ENCODE measurements at regions of chr7 and their contacts with region 1.

Region 1: DNA sequence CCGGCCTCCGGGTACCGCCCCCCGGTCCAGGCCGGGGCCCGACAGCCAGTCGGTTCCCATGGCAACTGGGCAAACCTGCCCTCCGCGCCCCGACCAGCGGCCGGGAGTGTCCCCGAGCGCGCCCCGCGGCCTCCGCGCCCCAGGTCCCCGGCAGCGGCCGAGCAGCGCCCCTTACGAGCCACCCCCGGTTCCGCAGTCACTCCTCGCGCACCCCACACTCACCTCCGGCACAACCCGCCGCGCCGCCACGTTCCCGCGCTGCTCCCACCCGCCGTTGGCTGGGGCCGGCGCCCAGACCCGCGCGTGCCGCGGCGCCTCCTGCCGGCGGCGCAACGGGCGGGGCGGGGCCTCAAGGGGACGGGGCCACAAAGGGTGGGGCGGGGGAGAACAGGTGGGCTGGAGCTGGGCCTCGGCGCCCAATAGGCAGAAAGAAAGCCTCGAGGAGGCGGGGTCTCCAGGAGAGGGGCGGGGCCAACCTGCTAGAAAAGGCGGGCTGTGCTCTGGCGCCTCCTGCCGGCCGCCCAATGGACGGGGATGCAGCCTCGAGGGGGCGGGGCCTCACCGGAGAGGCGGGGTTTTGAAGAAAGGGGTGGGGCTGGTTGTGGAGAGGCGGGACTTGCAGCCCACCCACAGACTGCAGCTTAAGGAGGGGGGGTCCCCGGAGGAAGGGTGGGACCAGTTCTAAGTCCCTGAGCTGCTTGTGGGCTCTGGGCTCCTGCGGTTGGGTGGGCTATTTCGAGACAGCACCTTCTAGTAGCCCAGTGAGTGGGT is at the start of gene RADIL:
- DNase-seq: peak; percentile 65 to 92 (median 86)
- ATAC-seq: peak; percentile 98
- H3K4me3 ChIP-seq: no peak within 1 kb of the TSS
- H3K4me3 Mint-ChIP-seq: peak within 1 kb of the TSS; percentile 48 to 79 (median 76)
- H3K27ac ChIP-seq: no peak within 1 kb of the TSS
- H3K27ac Mint-ChIP-seq: peak within 1 kb of the TSS in 2 of 9 donors; percentile 19 to 25
- H3K4me1 ChIP-seq: no peaks in the 10 kb centered on the region
- H3K4me1 Mint-ChIP-seq: peaks cover 7 to 17% (median 13%) of the 10 kb centered on the region in 7 donors
- H3K27me3 ChIP-seq: peaks cover 0 to 8% of the 10 kb centered on the region in 2 donors
- H3K27me3 Mint-ChIP-seq: peaks cover 23 to 39% (median 32%) of the 10 kb centered on the region in 5 donors
- total RNA-seq, gene RADIL: 0.08 to 0.12 TPM in 2 of 5 experiments, not detected in the others

Region 2: DNA sequence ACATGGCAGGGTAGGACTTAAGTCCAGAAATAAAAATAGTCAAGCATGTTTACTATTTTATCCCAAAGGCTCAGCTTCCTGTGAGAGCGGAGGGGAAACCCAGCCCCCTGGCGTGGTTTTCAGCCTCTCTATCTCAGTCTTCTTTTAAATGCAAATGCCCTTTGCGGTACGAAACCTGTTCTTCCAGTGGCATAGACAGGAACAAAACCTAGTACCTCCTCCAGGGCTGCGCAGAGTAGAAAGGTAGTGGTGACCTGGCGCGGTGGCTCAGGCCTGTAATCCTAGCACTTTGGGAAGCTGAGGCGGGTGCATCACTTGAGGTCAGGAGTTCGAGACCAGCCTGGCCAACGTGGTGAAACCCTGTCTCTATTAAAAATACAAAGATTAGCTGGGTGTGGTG is 382.7 kb before region 1 on chr7:
- CTCF ChIA-PET with region 1: no interaction called
- POLR2A ChIA-PET with region 1: no interaction called
- intact Hi-C with region 1: no loop called
- DNase-seq: no peak
- ATAC-seq: no peak
- H3K4me3 ChIP-seq: no peak overlapping the region
- H3K4me3 Mint-ChIP-seq: no peak overlapping the region
- H3K27ac ChIP-seq: no peak overlapping the region
- H3K27ac Mint-ChIP-seq: no peak overlapping the region
- H3K4me1 ChIP-seq: no peaks in the 10 kb centered on the region
- H3K4me1 Mint-ChIP-seq: no peaks in the 10 kb centered on the region
- H3K27me3 ChIP-seq: no peaks in the 10 kb centered on the region
- H3K27me3 Mint-ChIP-seq: peaks cover 0 to 15% (median 6%) of the 10 kb centered on the region in 5 donors

Region 3: GRCh38 chr7:4610768-4611467 is 272.6 kb before region 1 on chr7:
- CTCF ChIA-PET with region 1: no interaction called
- POLR2A ChIA-PET with region 1: no interaction called
- intact Hi-C with region 1: loop called in 1 of 2 experiments (anchors 10 kb)
- DNase-seq: peak; percentile 23 to 77 (median 71)
- ATAC-seq: peak; percentile 91
- H3K4me3 ChIP-seq: no peak overlapping the region
- H3K4me3 Mint-ChIP-seq: no peak overlapping the region
- H3K27ac ChIP-seq: no peak overlapping the region
- H3K27ac Mint-ChIP-seq: peak overlapping the region in 3 of 9 donors; percentile 5 to 67 (median 26)
- H3K4me1 ChIP-seq: peaks cover 0 to 12% of the 10 kb centered on the region in 2 donors
- H3K4me1 Mint-ChIP-seq: peaks cover 11 to 28% (median 20%) of the 10 kb centered on the region in 7 donors
- H3K27me3 ChIP-seq: no peaks in the 10 kb centered on the region
- H3K27me3 Mint-ChIP-seq: peaks cover 0 to 3% (median 0%) of the 10 kb centered on the region in 5 donors

Region 4: DNA sequence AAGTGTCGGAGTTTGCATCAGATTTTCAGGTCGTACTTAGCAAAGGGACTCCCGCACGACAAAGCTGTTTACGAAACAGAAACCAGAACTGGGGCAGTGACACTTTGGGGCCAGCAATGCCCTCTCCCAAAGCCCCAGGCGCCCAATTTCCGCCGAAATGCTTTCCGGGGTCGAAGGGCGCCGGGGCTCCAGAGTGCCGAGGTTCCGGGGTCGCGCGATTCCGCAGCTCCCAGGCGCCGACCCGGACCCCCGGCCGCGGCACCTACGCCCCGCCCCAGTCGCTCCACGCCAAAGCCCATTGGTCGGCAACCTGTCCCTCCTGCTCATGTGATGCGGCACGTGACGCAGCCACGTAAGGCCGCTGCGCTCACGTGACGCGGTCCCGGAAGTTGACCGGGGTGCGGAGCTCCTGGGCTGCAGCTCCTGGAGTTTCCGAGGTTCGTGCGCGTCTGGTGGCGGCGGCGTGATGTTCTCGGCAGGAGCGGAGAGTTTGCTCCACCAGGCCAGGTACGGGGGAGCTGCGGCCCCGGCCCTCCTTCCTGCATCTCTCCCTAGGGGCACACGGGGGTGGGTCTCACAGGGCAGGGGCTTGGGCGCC is 108.2 kb before region 1 on chr7 and contains the start of gene AP5Z1:
- CTCF ChIA-PET with region 1: no interaction called
- POLR2A ChIA-PET with region 1: no interaction called
- intact Hi-C with region 1: loop called in 1 of 2 experiments (anchors 5 kb)
- DNase-seq: peak; percentile 85 to 95 (median 94)
- ATAC-seq: peak; percentile 95
- H3K4me3 ChIP-seq: peak within 1 kb of the TSS; percentile 95
- H3K4me3 Mint-ChIP-seq: peak within 1 kb of the TSS; percentile 93 to 99 (median 98)
- H3K27ac ChIP-seq: peak within 1 kb of the TSS; percentile 94
- H3K27ac Mint-ChIP-seq: peak within 1 kb of the TSS; percentile 93 to 99 (median 98)
- H3K4me1 ChIP-seq: peaks cover 28 to 31% of the 10 kb centered on the region in 2 donors
- H3K4me1 Mint-ChIP-seq: peaks cover 29 to 62% (median 44%) of the 10 kb centered on the region in 7 donors
- H3K27me3 ChIP-seq: no peaks in the 10 kb centered on the region
- H3K27me3 Mint-ChIP-seq: no peaks in the 10 kb centered on the region
- total RNA-seq, gene AP5Z1: 69.4 to 114 (median 90.1) TPM

Region 5: DNA sequence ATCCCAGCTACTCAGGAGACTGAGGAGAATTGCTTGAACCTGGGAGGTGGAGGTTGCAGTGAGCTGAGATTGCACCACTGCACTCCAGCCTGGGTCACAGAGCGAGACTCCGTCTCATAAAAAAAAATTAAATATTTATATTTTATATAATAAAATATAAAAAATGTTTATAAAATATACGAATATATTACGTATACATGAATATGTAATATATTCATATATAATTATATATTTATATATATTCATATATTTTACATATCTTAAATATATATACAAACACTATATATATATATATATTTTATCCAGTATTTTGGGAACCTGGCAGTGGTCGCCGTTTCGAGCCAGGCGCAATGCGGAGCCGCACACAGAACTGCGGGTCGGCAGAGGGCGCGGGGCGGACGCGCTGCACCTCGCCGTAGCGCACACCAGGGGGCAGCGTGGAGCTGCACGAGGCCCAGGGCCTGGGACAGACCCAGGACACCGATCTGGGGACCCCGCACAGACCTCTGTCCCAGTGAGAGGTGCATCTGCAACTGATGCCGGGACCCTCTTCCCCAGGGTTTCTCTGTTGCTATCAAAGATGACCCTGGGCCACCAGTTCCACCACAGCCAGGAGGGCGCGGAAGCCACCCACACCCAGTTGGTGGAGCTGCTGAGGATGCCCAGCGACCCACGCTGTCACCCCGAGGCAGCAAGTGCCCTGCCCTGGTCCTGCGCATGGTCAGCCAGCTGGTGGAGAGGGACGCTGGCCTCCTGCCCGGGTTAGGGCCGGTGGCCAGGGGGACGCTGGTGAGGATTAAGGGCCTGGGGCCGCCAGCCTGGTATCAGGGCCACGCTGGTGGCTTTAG is 85.5 kb before region 1 on chr7:
- CTCF ChIA-PET with region 1: interaction called, 4 read pairs
- POLR2A ChIA-PET with region 1: no interaction called
- intact Hi-C with region 1: loop called (anchors 5 kb)
- DNase-seq: peak; percentile 34 to 77 (median 60)
- ATAC-seq: peak; percentile 91
- H3K4me3 ChIP-seq: no peak overlapping the region
- H3K4me3 Mint-ChIP-seq: no peak overlapping the region
- H3K27ac ChIP-seq: no peak overlapping the region
- H3K27ac Mint-ChIP-seq: no peak overlapping the region
- H3K4me1 ChIP-seq: no peaks in the 10 kb centered on the region
- H3K4me1 Mint-ChIP-seq: peaks cover 0 to 10% (median 6%) of the 10 kb centered on the region in 7 donors
- H3K27me3 ChIP-seq: no peaks in the 10 kb centered on the region
- H3K27me3 Mint-ChIP-seq: no peaks in the 10 kb centered on the region

Region 6: DNA sequence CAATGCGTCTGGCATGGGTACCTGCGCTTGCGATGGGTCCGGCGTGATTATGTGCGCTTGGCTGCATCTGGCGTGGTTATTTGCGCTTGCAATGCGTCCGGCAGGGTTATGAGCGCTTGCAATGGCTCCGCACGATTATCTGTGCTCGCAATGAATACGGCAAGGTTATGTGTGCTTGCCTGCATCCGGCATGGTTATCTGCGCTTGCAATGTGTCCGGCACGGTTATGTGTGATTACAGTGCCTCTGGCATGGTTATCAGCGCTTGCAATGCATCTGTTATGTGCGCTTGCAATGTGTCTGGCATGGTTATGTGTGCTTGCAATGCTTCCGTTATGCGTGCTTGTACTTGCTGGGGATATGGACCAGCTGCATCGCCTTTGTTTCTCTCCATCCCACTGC is 199.8 kb after region 1 on chr7:
- CTCF ChIA-PET with region 1: no interaction called
- POLR2A ChIA-PET with region 1: no interaction called
- intact Hi-C with region 1: loop called in 1 of 2 experiments (anchors 1 kb)
- DNase-seq: no peak
- ATAC-seq: no peak
- H3K4me3 ChIP-seq: no peak overlapping the region
- H3K4me3 Mint-ChIP-seq: peak overlapping the region in 1 of 10 donors; percentile 11
- H3K27ac ChIP-seq: no peak overlapping the region
- H3K27ac Mint-ChIP-seq: peak overlapping the region in 1 of 9 donors; percentile 38
- H3K4me1 ChIP-seq: no peaks in the 10 kb centered on the region
- H3K4me1 Mint-ChIP-seq: peaks cover 0 to 14% (median 4%) of the 10 kb centered on the region in 7 donors
- H3K27me3 ChIP-seq: no peaks in the 10 kb centered on the region
- H3K27me3 Mint-ChIP-seq: peaks cover 0 to 26% (median 0%) of the 10 kb centered on the region in 5 donors